Natural killer cell (primary cell): ENCODE measurements at regions of chr6 and their contacts with region 1.

Region 1: DNA sequence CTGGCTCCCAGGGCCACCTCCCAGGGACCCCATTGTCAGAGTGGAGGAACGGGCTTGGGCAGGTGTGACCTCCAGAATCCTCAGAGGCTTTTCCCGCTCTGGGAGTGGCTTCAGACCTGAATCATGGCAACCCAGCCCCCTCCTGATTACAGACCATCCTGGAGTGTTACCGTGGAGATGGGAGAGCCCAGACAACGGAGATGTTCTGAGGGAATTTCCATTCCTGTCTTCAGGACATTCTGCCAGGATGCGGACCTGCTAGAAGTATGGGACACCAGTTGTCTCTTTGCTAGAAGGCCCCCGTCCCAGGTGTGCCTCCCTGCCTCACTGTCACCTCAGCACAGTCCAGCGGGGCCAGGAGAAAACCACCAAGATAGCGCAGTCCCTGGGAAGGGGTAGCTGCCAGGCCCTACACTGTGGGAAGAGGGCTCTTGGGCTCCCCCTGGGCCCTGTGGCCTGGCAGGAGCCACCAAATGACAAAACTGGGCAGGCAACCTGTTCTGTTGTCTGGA is 109.9 kb downstream of the PSMB1 start:
- DNase-seq: no peak
- ATAC-seq: no peak
- H3K4me3 ChIP-seq: no peak overlapping the region
- H3K4me3 Mint-ChIP-seq: peak overlapping the region; percentile 55
- H3K27ac ChIP-seq: peak overlapping the region; percentile 92
- H3K27ac Mint-ChIP-seq: peak overlapping the region; percentile 86 to 95
- H3K4me1 ChIP-seq: peaks cover 73% of the 10 kb centered on the region
- H3K4me1 Mint-ChIP-seq: peaks cover 72 to 77% of the 10 kb centered on the region in 2 donors
- H3K27me3 ChIP-seq: no peaks in the 10 kb centered on the region
- H3K27me3 Mint-ChIP-seq: no peaks in the 10 kb centered on the region
- CTCF ChIP-seq: no peak

Region 2: GRCh38 chr6:169805242-169805838 is 637.9 kb before region 1 on chr6:
- intact Hi-C with region 1: loop called (anchors 1 kb)
- DNase-seq: peak in 1 of 2 donors; percentile 51
- ATAC-seq: peak; percentile 19 to 55 (median 40)
- H3K4me3 ChIP-seq: no peak overlapping the region
- H3K4me3 Mint-ChIP-seq: peak overlapping the region; percentile 33
- H3K27ac ChIP-seq: no peak overlapping the region
- H3K27ac Mint-ChIP-seq: peak overlapping the region; percentile 72 to 87
- H3K4me1 ChIP-seq: peaks cover 73% of the 10 kb centered on the region
- H3K4me1 Mint-ChIP-seq: peaks cover 68 to 72% of the 10 kb centered on the region in 2 donors
- H3K27me3 ChIP-seq: peaks cover 5% of the 10 kb centered on the region
- H3K27me3 Mint-ChIP-seq: peaks cover 39 to 44% of the 10 kb centered on the region in 2 donors
- CTCF ChIP-seq: no peak

Region 3: DNA sequence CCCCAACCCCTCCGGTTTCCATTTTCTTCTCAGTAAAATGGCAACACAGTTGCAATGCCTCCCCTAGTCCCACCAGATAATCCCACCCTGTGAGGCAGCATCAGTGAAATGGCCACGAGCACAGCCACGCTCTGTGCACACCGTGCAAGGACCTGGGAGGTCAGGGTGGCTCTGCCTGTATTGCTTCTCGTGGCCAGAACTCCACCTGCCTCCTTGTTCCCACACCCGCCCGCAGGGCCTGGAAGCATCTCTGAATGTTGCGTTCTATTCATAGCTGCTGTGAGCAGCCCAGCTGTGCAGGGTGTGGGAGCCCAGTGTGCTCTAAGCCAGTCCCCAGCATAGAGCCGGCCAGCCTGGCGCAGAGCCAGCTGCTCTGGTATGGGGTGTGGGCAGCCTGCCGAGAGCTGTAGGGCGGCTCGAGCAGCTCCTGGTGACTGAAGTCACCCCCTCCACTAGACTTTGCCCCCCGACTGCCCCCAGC is 313.5 kb before region 1 on chr6:
- intact Hi-C with region 1: no loop called
- DNase-seq: no peak
- ATAC-seq: no peak
- H3K4me3 ChIP-seq: no peak overlapping the region
- H3K4me3 Mint-ChIP-seq: no peak overlapping the region
- H3K27ac ChIP-seq: no peak overlapping the region
- H3K27ac Mint-ChIP-seq: no peak overlapping the region
- H3K4me1 ChIP-seq: peaks cover under 1% of the 10 kb centered on the region
- H3K4me1 Mint-ChIP-seq: peaks cover 0 to 6% of the 10 kb centered on the region in 2 donors
- H3K27me3 ChIP-seq: no peaks in the 10 kb centered on the region
- H3K27me3 Mint-ChIP-seq: peaks cover 0 to 3% of the 10 kb centered on the region in 2 donors
- CTCF ChIP-seq: no peak

Region 4: GRCh38 chr6:170306324-170307079 is 136.7 kb before region 1 on chr6 and contains the start of gene FAM120B:
- intact Hi-C with region 1: loop called (anchors 5 kb)
- DNase-seq: peak; percentile 95 to 98
- ATAC-seq: peak; percentile 94 to 98 (median 95)
- H3K4me3 ChIP-seq: peak within 1 kb of the TSS; percentile 87
- H3K4me3 Mint-ChIP-seq: peak within 1 kb of the TSS; percentile 96
- H3K27ac ChIP-seq: peak within 1 kb of the TSS; percentile 86
- H3K27ac Mint-ChIP-seq: peak within 1 kb of the TSS; percentile 92 to 93
- H3K4me1 ChIP-seq: peaks cover 25% of the 10 kb centered on the region
- H3K4me1 Mint-ChIP-seq: peaks cover 42% of the 10 kb centered on the region in 2 donors
- H3K27me3 ChIP-seq: no peaks in the 10 kb centered on the region
- H3K27me3 Mint-ChIP-seq: peaks cover 20 to 22% of the 10 kb centered on the region in 2 donors
- CTCF ChIP-seq: no peak
- total RNA-seq, gene FAM120B: 37.8 to 55.6 (median 39.9) TPM

Region 5: GRCh38 chr6:170405311-170405975 is 37.8 kb before region 1 on chr6:
- intact Hi-C with region 1: loop called (anchors 5 kb)
- DNase-seq: no peak
- ATAC-seq: peak; percentile 57 to 92 (median 87)
- H3K4me3 ChIP-seq: no peak overlapping the region
- H3K4me3 Mint-ChIP-seq: peak overlapping the region; percentile 49
- H3K27ac ChIP-seq: peak overlapping the region; percentile 1
- H3K27ac Mint-ChIP-seq: peak overlapping the region; percentile 82
- H3K4me1 ChIP-seq: peaks cover 25% of the 10 kb centered on the region
- H3K4me1 Mint-ChIP-seq: peaks cover 73 to 75% of the 10 kb centered on the region in 2 donors
- H3K27me3 ChIP-seq: no peaks in the 10 kb centered on the region
- H3K27me3 Mint-ChIP-seq: no peaks in the 10 kb centered on the region
- CTCF ChIP-seq: no peak

Region 6: DNA sequence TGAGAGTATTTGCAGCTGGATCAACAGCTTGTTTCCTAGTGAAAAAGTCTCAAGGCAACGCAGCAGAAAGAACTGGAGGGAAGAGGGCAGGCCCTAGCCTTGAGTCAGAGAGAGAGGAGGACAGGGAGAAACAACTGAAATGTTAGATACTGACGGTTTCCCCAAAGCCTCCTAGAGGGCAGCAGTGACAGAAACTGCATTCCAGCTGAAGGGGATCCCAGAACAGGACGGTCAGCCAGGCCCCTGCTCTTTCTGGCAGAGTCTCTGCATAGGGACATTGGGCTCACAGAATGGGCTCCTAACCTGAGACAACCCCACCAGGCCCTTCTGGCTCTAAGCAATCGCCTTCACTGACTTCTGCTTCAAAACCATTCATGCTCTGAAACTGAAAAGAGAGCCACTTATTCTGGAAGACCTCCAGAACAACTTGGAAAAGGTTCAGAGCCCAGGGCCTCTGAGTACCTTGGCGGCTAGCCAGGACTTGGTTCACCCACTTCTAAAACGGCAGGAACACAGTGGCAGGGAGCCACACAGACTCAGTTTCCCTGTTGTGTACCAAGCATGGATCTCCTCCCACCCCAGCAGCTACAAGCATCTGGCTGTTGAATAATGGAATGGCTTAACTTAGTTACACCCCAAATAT is 37.0 kb after region 1 on chr6:
- intact Hi-C with region 1: loop called (anchors 5 kb)
- DNase-seq: no peak
- ATAC-seq: no peak
- H3K4me3 ChIP-seq: no peak overlapping the region
- H3K4me3 Mint-ChIP-seq: no peak overlapping the region
- H3K27ac ChIP-seq: no peak overlapping the region
- H3K27ac Mint-ChIP-seq: no peak overlapping the region
- H3K4me1 ChIP-seq: peaks cover 16% of the 10 kb centered on the region
- H3K4me1 Mint-ChIP-seq: peaks cover 35 to 42% of the 10 kb centered on the region in 2 donors
- H3K27me3 ChIP-seq: no peaks in the 10 kb centered on the region
- H3K27me3 Mint-ChIP-seq: peaks cover 0 to 4% of the 10 kb centered on the region in 2 donors
- CTCF ChIP-seq: no peak